ENCODE measurements at regions of chr5 and their contacts with region 1.

Region 1: GRCh38 chr5:151239237-151239861 is 13.6 kb upstream of the GM2A start:
- DNase-seq: peak; percentile 83
- H3K4me3 ChIP-seq: peak overlapping the region in 1 of 4 donors; percentile 28
- H3K27ac ChIP-seq: peak overlapping the region; percentile 61 to 86 (median 73)
- H3K4me1 ChIP-seq: peaks cover 5 to 13% (median 8%) of the 10 kb centered on the region in 4 donors
- H3K27me3 ChIP-seq: no peaks in the 10 kb centered on the region
- CTCF ChIP-seq: peak; percentile 54 to 93 (median 67)
- EP300 ChIP-seq: no peak
- POLR2A ChIP-seq: no peak

Region 2: DNA sequence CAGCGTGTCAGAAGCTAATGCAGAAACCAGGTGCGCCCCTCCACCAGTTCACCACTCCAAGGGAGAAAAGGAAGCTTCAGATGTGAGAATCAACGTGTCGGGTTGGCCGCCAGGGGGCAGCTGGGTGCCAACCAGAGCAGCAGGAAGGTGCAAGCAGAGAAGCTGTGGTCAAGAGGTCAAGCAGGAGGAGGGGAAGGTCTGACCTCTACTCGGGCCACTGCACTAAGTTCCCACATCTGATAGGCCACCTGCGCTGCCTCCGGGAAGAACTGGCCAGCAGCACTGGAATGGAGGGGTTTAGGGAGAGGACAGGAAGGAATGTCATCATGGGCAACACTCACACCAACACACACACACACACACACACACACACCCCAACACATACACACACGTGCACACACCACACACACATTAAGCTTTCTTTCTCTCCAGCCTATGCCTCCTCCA is 113.1 kb before region 1 on chr5:
- in situ Hi-C with region 1: loop called in 1 of 4 experiments (anchors 5 kb)
- intact Hi-C with region 1: loop called (anchors 5 kb)
- DNase-seq: peak; percentile 77
- H3K4me3 ChIP-seq: no peak overlapping the region
- H3K27ac ChIP-seq: peak overlapping the region in 2 of 4 donors; percentile 36 to 39
- H3K4me1 ChIP-seq: peaks cover 0 to 12% (median 0%) of the 10 kb centered on the region in 4 donors
- H3K27me3 ChIP-seq: no peaks in the 10 kb centered on the region
- CTCF ChIP-seq: peak; percentile 75 to 90 (median 85)
- EP300 ChIP-seq: no peak
- POLR2A ChIP-seq: no peak

Region 3: GRCh38 chr5:151134238-151134637 is 105.1 kb before region 1 on chr5:
- in situ Hi-C with region 1: loop called in 1 of 4 experiments (anchors 5 kb)
- intact Hi-C with region 1: loop called (anchors 5 kb)
- DNase-seq: peak; percentile 46
- H3K4me3 ChIP-seq: no peak overlapping the region
- H3K27ac ChIP-seq: peak overlapping the region in 3 of 4 donors; percentile 12 to 48 (median 21)
- H3K4me1 ChIP-seq: no peaks in the 10 kb centered on the region
- H3K27me3 ChIP-seq: no peaks in the 10 kb centered on the region
- CTCF ChIP-seq: no peak
- EP300 ChIP-seq: no peak
- POLR2A ChIP-seq: no peak

Measured in transverse colon (tissue), 4 donors.